ENCODE measurements at regions of chr1 and their contacts with region 1.

Region 1: DNA sequence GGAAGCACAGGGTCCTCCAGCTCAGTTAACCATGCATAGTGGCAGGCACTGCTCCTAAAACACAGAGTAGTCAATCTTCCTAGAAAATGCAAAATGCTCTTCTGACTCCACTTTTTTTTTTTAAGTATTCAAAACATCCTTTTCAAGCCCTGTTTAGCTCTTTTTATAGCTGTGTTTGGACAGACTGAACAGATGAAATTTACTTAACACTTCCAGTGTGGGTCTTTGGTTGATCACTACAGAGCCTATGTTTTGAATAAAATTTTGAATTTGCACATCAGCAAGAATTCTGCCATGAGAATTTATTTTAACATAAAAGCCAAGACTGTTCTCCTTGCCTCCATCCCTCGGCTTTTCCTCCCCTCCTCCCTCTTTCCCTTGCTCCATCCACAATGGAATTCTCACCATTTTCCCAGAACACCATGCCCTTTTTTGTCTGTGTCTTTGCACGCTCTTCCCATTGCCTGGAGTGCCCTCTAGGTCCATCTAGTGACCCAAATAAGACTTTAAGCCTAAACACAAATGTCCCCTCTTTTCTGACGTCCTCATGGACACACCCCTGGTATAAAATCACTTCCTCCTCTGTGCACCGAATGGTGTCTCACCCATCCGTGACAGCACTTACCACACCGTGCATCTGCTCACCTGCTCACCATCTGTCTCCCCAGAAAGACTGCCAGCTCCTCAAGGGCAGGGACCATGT is 24.0 kb upstream of the CPT2 start:
- DNase-seq: no peak
- H3K4me3 ChIP-seq: no peak overlapping the region
- H3K27ac ChIP-seq: peak overlapping the region in 3 of 4 donors; percentile 0 to 59 (median 50)
- H3K4me1 ChIP-seq: peaks cover 0 to 42% (median 32%) of the 10 kb centered on the region in 4 donors
- H3K27me3 ChIP-seq: no peaks in the 10 kb centered on the region
- CTCF ChIP-seq: no peak
- EP300 ChIP-seq: no peak
- POLR2A ChIP-seq: no peak

Region 2: DNA sequence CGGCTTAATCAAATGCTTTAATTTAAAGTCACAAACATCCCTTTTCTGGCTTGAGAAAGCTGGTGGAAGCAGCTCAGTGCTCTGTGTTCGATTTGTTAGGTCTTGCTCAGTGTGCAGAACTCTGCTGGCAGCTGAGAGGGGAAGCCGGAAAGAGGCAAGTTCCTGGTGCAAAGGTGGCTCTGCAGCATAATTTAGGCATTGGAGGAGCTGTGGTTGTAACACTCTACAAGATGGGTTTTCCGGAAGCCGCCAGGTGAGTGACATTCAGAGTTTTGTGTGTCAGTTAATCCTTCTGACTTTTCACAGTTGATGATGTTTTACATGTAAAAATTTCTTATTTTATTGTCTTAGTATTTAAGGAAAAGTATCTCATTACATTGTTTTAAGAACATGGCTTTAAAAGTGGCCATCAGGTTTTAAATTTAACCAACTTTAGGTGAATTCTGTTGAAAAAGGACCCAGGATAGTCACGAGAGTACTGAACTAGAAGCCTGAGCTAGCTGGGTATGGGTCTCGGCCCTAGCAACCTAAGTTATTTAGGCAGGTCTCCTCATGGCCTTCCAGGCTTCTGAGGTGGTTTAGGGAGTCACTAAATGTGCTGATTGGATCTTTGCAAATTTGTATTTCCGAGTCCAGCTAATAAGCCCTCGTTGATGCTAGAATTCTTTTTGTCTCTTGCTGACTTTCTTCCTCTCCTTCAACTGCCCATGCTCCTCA is 157.6 kb before region 1 on chr1:
- intact Hi-C with region 1: loop called (anchors 5 kb)
- DNase-seq: peak; percentile 85
- H3K4me3 ChIP-seq: peak overlapping the region; percentile 37 to 55 (median 54)
- H3K27ac ChIP-seq: peak overlapping the region; percentile 44 to 73 (median 68)
- H3K4me1 ChIP-seq: peaks cover 0 to 27% (median 22%) of the 10 kb centered on the region in 4 donors
- H3K27me3 ChIP-seq: no peaks in the 10 kb centered on the region
- CTCF ChIP-seq: no peak
- EP300 ChIP-seq: no peak
- POLR2A ChIP-seq: no peak

Region 3: DNA sequence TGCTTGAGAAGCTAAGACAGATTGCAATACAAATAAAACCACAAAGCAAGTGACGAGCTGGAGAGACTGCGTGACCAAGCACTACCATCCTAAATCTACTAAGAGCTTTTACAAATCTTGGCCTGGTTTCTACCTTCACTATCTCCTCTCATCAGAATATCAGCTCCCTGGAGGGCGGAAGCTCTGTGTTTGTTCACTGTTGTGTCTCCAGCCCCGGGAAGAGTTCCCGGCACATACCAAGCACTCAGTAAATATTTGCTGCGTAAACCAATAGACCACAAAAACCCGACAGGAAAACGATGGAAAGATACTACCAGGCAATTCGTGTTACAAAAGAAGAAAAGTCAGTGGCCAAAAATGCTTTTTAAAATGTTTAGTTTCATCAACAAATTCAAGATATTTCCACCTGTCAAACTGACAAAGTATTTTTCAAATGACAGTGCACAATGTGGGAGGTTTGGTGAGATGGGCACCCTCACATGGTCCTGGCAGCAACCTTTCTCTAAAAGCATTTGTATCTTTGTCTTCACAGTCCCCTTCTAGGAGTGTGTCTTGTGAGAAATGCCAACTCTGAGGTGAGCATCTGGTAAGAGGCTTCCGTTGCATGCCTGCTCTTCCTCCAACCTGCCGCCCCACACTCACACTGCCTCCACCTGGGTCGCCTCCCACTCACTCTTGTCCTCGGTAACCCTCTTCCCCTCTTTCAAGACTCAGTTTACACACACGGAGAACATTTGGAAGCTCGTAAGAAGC is 64.8 kb before region 1 on chr1:
- intact Hi-C with region 1: loop called (anchors 10 kb)
- DNase-seq: no peak
- H3K4me3 ChIP-seq: no peak overlapping the region
- H3K27ac ChIP-seq: peak overlapping the region in 2 of 4 donors; percentile 68 to 71
- H3K4me1 ChIP-seq: peaks cover 0 to 62% (median 51%) of the 10 kb centered on the region in 4 donors
- H3K27me3 ChIP-seq: no peaks in the 10 kb centered on the region
- CTCF ChIP-seq: no peak
- EP300 ChIP-seq: no peak
- POLR2A ChIP-seq: no peak

Region 4: DNA sequence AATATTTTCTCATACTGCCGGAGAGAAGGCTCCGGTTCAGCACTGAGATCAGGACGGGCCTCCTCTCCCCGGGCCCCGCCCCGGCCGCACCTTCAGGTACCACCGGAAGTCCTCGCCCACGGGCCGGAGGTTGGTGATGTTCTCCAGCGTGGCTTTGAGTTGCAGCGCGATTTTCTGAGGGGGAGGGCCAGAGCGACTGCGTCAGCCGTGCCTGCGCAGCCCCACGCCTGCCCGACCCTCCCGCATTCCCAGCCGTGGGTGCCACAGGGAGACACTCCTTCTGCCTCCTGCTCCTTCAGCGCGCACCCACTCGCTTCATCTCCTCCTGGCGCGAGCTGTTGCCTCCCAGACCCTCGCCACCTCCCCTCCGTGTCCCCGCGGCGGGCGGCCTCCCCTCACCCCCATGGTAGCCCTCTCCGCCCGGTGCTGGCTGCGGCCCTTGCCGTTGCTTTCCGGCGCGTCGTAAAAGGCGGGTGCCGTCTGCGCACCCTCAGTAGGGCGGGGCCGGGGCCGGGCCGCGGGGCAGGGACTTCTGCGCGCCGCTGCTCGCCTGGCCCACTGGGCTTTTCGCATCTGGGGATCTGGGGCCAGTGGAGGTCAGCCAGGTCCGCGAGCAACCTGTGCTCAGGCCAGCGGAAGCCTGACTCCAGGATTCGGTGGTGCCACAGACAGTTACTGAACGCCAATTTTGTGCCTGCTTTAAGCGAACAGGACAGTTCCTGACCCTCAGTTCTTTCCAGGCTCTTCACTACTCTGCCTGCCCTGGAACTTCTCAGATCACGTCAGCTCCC is 47.8 kb after region 1 on chr1 and contains the start of gene CZIB:
- intact Hi-C with region 1: no loop called
- DNase-seq: peak; percentile 96
- H3K4me3 ChIP-seq: peak within 1 kb of the TSS; percentile 56 to 89 (median 82)
- H3K27ac ChIP-seq: peak within 1 kb of the TSS; percentile 93 to 99 (median 96)
- H3K4me1 ChIP-seq: peaks cover 0 to 17% (median 16%) of the 10 kb centered on the region in 4 donors
- H3K27me3 ChIP-seq: no peaks in the 10 kb centered on the region
- CTCF ChIP-seq: no peak
- EP300 ChIP-seq: peak in 1 of 4 donors; percentile 39
- POLR2A ChIP-seq: peak; percentile 85 to 91
- total RNA-seq, gene CZIB: 79.2 to 95.6 (median 92.7) TPM

Region 5: GRCh38 chr1:53278201-53278725 is 105.7 kb after region 1 on chr1:
- intact Hi-C with region 1: no loop called
- DNase-seq: peak; percentile 73
- H3K4me3 ChIP-seq: no peak overlapping the region
- H3K27ac ChIP-seq: no peak overlapping the region
- H3K4me1 ChIP-seq: no peaks in the 10 kb centered on the region
- H3K27me3 ChIP-seq: peaks cover 0 to 13% (median 0%) of the 10 kb centered on the region in 3 donors
- CTCF ChIP-seq: peak; percentile 80 to 94 (median 88)
- EP300 ChIP-seq: no peak
- POLR2A ChIP-seq: no peak

Measured in sigmoid colon (tissue), 7 donors.